Right cardiac atrium (tissue), 5 donors: ENCODE measurements at regions of chr5 and their contacts with region 1.

Region 1: DNA sequence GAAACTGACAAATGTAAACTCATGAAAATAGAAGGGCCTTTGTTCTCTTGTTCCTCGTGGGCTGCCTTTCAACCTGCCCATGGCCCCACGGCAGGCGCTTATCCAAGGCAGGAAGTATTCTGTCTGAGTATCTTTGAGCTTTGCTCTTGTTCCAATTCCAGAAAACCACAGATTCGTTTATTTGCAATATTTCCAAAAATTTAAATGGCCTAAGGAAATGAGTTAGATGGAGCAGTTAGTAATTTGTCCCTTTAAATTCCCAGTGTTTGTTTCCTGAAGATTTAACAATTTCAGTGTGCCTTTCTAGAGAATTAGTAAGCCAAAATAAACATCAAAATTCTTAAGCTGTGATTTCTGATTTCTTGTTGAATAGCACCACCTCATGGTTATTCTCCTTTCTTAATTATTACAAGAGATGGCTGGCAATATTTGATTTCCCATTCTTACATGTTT is 299.4 kb upstream of the RASA1 start:
- DNase-seq: peak; percentile 40 to 81 (median 68)
- ATAC-seq: peak; percentile 65 to 84
- H3K4me3 ChIP-seq: no peak overlapping the region
- H3K27ac ChIP-seq: no peak overlapping the region
- H3K4me1 ChIP-seq: no peaks in the 10 kb centered on the region
- H3K27me3 ChIP-seq: no peaks in the 10 kb centered on the region

Region 2: DNA sequence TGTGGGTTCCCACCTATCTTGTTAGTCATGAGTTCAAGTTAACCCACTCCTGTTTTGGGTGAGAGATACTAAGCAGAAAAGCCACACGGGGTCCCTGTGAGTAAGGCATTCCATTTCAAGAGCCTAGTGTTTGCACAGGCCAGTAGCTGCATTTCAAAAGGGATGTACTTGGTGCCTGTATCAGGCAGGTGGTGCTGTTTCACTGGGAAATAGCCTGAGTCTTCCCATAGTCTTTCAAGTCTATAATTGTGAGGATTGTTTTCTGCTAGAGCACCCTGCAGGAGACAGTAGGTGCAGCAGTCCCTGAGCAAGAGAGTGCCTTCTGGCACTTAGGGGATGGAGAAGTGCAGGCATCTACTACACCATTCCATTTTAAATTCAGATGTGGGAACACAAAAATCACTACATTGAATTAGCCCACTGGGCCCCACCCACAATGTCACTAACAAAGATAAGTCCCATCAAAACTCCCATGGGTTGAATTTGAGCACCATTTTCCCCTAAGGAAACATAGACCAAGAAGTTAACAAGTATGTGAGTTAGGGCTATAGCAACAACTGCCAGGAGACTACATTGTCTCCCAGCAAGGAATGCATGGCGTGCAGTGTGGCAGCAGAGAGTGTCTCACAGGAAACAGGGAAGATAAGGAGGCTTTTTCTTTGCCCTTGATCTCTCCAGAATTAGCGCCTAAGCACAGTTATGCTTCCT is 87.4 kb before region 1 on chr5:
- intact Hi-C with region 1: loop called in 3 of 4 experiments (anchors 2 to 5 kb)
- DNase-seq: peak; percentile 15 to 44 (median 20)
- ATAC-seq: peak; percentile 93 to 95
- H3K4me3 ChIP-seq: no peak overlapping the region
- H3K27ac ChIP-seq: no peak overlapping the region
- H3K4me1 ChIP-seq: peaks cover 3% of the 10 kb centered on the region
- H3K27me3 ChIP-seq: no peaks in the 10 kb centered on the region

Region 3: DNA sequence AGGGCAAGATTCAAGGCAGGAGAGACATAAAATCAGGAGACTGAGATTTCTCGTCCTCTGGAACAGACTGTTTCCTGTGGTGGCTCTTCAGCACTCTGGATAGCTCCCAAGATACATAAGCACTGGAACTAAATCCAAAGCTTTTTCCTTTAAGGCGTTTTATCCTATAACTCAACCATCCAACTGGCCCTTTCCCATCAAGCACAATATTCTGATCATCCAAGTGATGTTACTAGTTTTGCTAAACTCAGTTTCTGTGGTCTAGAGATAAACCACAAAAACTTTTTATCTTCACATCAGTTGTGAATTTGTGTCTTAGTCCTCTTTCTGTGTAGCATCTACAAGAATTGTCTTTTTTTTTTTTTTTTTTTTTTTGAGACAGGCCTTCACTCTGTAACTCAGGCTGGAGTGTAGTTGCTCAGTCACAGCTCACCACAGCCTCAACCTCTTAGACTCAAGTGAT is 51.2 kb before region 1 on chr5:
- intact Hi-C with region 1: no loop called
- DNase-seq: no peak
- ATAC-seq: no peak
- H3K4me3 ChIP-seq: no peak overlapping the region
- H3K27ac ChIP-seq: no peak overlapping the region
- H3K4me1 ChIP-seq: no peaks in the 10 kb centered on the region
- H3K27me3 ChIP-seq: no peaks in the 10 kb centered on the region

Region 4: GRCh38 chr5:87034557-87034956 is 66.2 kb after region 1 on chr5:
- intact Hi-C with region 1: no loop called
- DNase-seq: no peak
- ATAC-seq: no peak
- H3K4me3 ChIP-seq: no peak overlapping the region
- H3K27ac ChIP-seq: no peak overlapping the region
- H3K4me1 ChIP-seq: no peaks in the 10 kb centered on the region
- H3K27me3 ChIP-seq: no peaks in the 10 kb centered on the region